Right lobe of liver (tissue), 6 donors: ENCODE measurements at regions of chr11 and their contacts with region 1.

Region 1: DNA sequence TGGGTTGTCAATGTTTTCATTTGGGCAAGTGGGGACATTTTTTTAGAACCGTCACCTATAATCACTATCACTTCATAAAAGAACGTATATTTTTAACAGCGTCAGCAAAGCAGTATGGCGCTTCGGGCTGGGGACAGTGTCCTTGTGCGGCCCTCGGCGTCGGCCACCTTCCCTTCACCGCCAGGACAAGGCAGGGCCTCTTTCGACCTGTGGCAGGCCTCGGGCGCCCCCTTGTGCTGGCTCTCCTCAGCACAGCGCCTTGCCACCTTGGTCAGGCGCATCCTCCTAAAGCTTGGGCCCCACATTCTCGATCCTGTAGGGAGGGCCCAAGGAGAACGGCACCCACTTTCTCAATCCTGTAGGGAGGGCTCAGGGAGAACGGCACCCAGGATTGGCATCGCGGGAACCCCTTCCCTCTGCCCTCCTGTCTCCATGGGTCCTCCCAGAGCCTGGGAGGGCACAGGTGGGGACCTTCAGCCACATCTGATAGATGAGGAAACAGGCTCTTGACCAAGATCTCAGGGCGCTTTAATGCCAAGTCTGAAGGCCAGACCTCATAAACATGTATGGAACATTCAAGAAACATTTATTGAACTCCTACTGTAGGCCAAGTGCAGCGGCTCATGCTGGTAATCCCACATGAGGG is 11.5 kb upstream of the FADD start:
- DNase-seq: peak; percentile 80 to 84 (median 81)
- ATAC-seq: peak; percentile 87 to 93 (median 92)
- H3K4me3 ChIP-seq: no peak overlapping the region
- H3K27ac ChIP-seq: no peak overlapping the region
- H3K4me1 ChIP-seq: peaks cover 0 to 3% (median 0%) of the 10 kb centered on the region in 4 donors
- H3K27me3 ChIP-seq: no peaks in the 10 kb centered on the region
- CTCF ChIP-seq: peak; percentile 95 to 99 (median 96)
- POLR2A ChIP-seq: no peak

Region 2: DNA sequence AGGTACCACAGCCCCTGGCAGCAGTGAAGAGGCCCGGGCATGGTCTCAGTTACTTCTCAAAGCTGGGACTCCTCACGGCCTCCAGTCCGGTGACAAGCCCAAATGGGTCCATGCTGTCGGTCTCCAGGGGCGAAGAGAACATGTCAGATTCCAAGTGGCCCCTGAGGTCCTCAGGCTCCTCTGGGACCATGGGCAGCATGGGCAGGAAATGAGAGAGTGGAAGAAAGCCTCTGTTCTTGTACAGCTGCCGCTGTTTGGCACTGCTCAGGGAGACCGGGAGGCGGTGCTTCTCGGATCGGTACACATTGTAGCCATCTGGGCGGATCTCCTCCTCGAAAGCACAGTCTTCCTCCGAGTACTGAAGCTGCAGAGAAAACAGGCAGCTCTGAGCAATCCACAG is 492.4 kb before region 1 on chr11:
- intact Hi-C with region 1: loop called in 1 of 2 experiments (anchors 5 kb)
- DNase-seq: no peak
- ATAC-seq: no peak
- H3K4me3 ChIP-seq: no peak overlapping the region
- H3K27ac ChIP-seq: no peak overlapping the region
- H3K4me1 ChIP-seq: peaks cover 0 to 11% (median 5%) of the 10 kb centered on the region in 4 donors
- H3K27me3 ChIP-seq: peaks cover 9 to 19% of the 10 kb centered on the region in 2 donors
- CTCF ChIP-seq: no peak
- POLR2A ChIP-seq: no peak

Region 3: DNA sequence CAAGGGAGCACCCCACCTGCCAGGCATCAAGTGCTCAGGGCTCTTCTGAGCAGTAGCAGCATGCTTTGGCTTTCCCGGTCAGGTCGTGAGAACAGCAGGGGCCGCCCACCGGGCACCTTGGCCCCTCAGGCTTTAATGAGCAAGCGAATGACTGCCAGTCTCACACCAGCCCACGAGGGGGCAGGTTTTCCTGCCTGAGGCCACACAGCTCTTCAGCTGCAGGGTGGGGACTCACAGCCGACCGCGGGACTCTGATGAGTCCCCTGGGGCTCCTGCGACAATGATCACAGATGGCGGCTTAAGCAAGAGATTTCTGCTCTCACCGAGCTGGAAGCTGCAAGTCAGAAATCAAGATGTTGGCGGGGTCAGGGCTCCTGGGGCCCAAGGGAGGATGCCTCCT is 473.5 kb before region 1 on chr11:
- intact Hi-C with region 1: loop called in 1 of 2 experiments (anchors 10 kb)
- DNase-seq: no peak
- ATAC-seq: peak in 3 of 4 donors; percentile 42 to 65 (median 55)
- H3K4me3 ChIP-seq: no peak overlapping the region
- H3K27ac ChIP-seq: no peak overlapping the region
- H3K4me1 ChIP-seq: no peaks in the 10 kb centered on the region
- H3K27me3 ChIP-seq: no peaks in the 10 kb centered on the region
- CTCF ChIP-seq: peak; percentile 32 to 56 (median 42)
- POLR2A ChIP-seq: no peak

Region 4: DNA sequence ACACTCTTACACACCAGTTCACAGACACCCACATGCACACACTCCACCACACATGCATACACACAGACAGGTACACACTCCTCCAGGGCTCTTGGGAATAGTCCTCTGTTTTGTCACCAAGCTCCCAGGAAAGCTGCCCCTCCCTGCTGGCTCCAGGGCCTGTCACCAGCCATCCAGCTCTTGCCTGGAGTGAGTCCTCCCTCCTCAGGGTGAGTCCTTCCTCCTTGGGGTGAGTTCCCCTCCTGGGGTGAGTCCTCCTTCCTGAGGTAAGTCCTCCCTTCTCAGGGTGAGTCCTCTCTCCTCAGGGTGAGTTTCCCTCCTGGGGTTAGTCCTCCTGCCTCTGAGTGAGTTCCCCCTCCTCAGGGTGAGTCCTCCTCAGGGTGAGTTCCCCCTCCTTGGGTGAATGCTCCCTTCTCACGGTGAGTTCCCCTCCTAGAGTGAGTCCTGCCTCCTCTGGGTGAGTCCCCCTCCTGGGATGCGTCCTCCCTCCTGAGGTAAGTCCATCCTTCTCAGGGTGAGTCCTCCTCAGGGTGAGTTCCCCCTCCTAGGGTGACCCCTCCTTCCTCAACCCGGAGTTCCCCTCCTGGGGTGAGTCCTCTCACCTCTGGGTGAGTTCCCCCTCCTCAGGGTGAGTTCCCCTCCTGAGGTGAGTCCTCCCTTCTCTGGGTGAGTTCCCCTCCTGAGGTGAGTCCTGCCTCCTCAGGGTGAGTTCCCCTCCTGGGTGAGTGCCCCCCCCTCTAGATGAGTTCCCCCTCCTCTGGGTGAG is 271.8 kb before region 1 on chr11:
- intact Hi-C with region 1: loop called (anchors 5 kb)
- DNase-seq: peak in 2 of 3 donors; percentile 15 to 36
- ATAC-seq: no peak
- H3K4me3 ChIP-seq: no peak overlapping the region
- H3K27ac ChIP-seq: no peak overlapping the region
- H3K4me1 ChIP-seq: peaks cover 0 to 25% (median 11%) of the 10 kb centered on the region in 4 donors
- H3K27me3 ChIP-seq: no peaks in the 10 kb centered on the region
- CTCF ChIP-seq: no peak
- POLR2A ChIP-seq: no peak

Region 5: DNA sequence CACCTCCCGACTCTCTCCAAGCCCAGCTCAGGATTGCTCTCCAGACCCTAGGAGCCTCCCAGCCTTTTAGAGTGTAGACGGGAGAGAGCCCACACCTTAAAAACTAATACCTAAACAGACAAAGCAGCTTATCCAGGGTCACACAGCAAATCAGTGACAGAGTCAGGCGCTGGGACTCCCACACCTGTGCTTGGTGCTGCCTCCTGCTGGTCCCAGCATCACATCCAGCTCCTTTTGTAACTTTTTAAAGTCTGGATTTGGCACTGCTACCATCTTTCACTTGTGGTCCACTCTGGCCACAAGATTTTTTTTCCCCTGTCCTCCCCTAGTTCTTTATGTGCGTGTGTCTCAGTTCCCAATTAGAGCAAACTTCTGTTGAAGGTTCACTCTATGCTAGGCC is 108.8 kb before region 1 on chr11:
- intact Hi-C with region 1: loop called in 1 of 2 experiments (anchors 10 kb)
- DNase-seq: no peak
- ATAC-seq: no peak
- H3K4me3 ChIP-seq: no peak overlapping the region
- H3K27ac ChIP-seq: no peak overlapping the region
- H3K4me1 ChIP-seq: peaks cover 0 to 29% (median 12%) of the 10 kb centered on the region in 4 donors
- H3K27me3 ChIP-seq: no peaks in the 10 kb centered on the region
- CTCF ChIP-seq: peak; percentile 20 to 33 (median 26)
- POLR2A ChIP-seq: no peak